Activated naive CD4-positive, alpha-beta T cell treated with anti-CD3 and anti-CD28 coated beads for 36 hours (primary cell): ENCODE measurements at regions of chr4 and their contacts with region 1.

Region 1: DNA sequence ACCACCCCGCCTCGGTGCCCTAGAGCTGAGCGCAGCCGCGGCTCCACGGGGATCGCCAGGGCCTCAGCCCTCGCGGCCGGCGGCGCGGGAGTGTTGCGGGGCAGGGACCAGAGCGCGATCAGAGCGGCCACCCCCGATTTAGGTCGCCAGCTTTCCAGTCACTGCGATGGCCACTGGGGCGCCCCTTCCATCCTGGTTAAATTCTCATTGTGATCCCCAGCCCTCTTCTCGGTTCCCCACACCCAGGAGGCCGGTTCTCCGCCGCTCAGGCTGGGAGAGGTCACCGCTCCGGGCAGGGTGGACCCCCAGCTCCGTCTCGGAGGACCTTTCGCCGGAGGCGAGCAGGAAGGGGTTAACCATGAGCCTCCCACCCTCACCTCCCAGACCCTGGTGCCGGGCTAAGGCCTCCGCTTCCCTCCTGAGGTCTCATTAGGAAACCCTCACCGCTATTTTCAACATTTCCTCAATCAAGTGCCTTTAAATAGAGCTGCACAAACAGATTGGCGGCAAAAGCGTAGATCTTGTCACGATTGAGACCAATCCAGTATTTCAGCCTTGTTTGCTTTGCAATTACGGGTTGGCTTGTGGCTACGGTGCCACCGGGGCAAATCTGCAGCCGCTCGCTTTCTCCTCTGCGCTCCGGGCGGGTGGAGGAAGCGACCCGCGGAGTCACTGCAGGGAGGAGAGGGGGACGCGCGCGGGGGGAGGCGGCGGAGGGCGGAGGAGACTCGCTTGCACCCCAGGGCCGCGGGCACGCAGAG is 8.3 kb upstream of the HAND2 start:
- DNase-seq: peak; percentile 11
- H3K4me3 Mint-ChIP-seq: peak overlapping the region; percentile 57
- H3K27ac Mint-ChIP-seq: no peak overlapping the region
- H3K4me1 Mint-ChIP-seq: peaks cover 12% of the 10 kb centered on the region
- H3K27me3 Mint-ChIP-seq: peaks cover 71% of the 10 kb centered on the region

Region 2: DNA sequence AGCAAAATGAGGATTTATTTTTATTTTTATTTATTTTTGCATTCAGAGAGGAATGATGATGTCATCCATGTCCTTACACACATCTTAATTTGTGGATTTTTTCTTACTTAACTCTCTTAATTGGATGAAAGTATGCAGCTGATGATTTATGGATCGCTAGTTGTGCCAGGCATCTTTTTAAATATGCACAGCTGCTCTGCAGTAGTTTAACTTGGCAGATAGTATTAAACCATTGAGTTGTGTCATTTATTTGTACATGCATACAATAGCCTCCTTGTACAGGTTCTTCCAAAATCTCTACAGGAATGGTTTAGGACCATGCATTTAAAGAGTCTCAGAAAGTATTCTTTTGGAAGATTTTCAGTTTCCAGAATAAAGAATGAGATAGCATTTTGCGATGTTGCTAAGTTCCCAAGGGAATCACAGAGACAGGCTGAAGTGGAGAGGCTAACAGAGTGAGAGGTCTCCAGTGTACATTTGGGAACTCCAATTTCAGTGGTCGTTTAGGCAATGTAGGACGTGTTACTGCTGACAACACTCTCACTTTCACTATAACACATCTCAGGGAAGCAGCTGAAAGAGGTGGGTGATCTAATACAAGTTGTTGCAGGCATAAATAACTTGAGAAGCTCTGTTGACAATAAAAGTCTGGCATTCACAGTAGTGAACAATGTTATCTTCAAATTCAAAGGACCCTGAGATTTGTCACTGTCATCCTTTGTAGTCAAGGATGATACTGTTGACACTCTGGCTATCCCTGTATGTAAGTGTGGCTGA is 89.5 kb before region 1 on chr4:
- CTCF ChIA-PET with region 1: no interaction called
- intact Hi-C with region 1: no loop called
- DNase-seq: no peak
- H3K4me3 Mint-ChIP-seq: no peak overlapping the region
- H3K27ac Mint-ChIP-seq: no peak overlapping the region
- H3K4me1 Mint-ChIP-seq: no peaks in the 10 kb centered on the region
- H3K27me3 Mint-ChIP-seq: no peaks in the 10 kb centered on the region

Region 3: DNA sequence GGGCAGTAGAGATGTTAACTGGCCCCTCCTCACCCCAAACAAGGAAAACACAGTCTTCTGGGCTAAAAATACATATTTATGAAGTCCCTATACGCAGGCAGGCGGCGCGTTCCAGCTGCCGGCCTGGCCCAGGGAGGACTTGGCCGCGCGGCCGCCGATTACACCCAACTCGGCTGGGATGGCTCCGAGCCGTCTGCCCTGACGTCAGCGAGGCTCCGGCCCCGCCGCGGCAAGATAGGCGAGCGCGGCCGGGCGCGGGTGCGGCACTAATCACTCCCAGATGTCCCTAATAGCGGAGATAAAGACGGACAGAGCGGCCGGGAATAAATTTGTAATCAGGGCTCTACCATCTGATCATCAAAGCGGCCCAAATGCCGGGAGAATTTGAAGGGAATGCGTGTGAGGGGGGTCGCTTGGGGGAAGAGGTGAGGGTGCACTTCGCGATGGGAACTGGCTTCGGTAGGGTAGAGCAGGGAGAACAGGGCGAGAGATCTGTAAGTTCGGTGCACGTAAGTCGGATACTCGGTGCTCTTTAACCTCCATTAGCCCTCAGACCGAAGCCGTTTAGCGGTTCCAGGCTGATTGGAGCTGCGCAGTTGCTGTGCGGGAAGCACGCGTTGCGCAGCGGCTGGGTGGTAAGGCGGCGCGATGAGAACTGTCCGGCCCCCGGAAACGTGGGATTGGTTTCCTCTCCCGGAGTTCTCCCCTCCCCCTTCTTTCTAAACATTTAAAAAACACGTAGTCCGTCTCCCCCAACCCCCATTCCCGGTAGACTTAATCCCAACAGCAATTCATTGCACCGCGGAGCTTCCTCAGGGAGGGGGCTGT is 16.0 kb before region 1 on chr4:
- CTCF ChIA-PET with region 1: no interaction called
- intact Hi-C with region 1: loop called (anchors 2 kb)
- DNase-seq: no peak
- H3K4me3 Mint-ChIP-seq: peak overlapping the region; percentile 26
- H3K27ac Mint-ChIP-seq: no peak overlapping the region
- H3K4me1 Mint-ChIP-seq: peaks cover 17% of the 10 kb centered on the region
- H3K27me3 Mint-ChIP-seq: peaks cover 89% of the 10 kb centered on the region